Naive thymus-derived CD4-positive, alpha-beta T cell (primary cell): ENCODE measurements at regions of chr10 and their contacts with region 1.

Region 1: DNA sequence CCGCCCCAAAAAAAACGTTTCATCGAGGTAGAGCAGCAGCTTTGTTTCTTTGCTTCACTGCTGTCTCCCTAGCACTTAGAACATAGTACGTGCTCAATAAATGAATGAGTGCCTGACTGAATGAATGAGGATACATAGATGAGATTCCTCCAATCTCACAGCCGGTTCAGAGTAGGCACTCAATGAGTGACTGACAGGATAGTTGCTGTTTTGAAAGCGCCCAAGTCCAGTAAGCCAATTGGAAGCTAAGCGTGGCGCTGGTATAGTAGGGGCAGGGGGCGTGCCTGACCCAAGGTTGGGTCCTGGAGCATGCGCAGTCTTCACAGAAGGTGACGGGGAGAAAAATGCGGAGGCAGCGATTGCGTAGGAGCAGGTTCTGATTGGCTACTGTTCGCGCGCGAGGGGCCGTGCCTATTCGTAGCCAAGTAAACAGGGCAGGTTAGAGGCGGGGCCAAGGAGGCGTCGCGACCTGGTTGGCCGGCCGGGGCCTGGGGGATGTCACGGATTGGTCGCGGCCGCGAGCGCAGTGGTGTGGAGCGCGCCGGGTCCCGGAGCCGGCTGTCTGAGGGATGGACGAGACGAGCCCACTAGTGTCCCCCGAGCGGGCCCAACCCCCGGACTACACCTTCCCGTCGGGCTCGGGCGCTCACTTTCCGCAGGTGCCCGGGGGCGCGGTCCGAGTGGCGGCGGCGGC is at the start of gene PI4K2A:
- DNase-seq: peak; percentile 89 to 99 (median 98)
- ATAC-seq: peak; percentile 98
- H3K4me3 ChIP-seq: peak within 1 kb of the TSS; percentile 82
- H3K4me3 Mint-ChIP-seq: peak within 1 kb of the TSS; percentile 64 to 99 (median 94)
- H3K27ac ChIP-seq: peak within 1 kb of the TSS; percentile 70
- H3K27ac Mint-ChIP-seq: peak within 1 kb of the TSS; percentile 69 to 94 (median 89)
- H3K4me1 ChIP-seq: peaks cover 4 to 15% of the 10 kb centered on the region in 2 donors
- H3K4me1 Mint-ChIP-seq: peaks cover 10 to 34% (median 26%) of the 10 kb centered on the region in 7 donors
- H3K27me3 ChIP-seq: no peaks in the 10 kb centered on the region
- H3K27me3 Mint-ChIP-seq: no peaks in the 10 kb centered on the region
- total RNA-seq, gene PI4K2A: 9.0 to 33.8 (median 11.0) TPM

Region 2: DNA sequence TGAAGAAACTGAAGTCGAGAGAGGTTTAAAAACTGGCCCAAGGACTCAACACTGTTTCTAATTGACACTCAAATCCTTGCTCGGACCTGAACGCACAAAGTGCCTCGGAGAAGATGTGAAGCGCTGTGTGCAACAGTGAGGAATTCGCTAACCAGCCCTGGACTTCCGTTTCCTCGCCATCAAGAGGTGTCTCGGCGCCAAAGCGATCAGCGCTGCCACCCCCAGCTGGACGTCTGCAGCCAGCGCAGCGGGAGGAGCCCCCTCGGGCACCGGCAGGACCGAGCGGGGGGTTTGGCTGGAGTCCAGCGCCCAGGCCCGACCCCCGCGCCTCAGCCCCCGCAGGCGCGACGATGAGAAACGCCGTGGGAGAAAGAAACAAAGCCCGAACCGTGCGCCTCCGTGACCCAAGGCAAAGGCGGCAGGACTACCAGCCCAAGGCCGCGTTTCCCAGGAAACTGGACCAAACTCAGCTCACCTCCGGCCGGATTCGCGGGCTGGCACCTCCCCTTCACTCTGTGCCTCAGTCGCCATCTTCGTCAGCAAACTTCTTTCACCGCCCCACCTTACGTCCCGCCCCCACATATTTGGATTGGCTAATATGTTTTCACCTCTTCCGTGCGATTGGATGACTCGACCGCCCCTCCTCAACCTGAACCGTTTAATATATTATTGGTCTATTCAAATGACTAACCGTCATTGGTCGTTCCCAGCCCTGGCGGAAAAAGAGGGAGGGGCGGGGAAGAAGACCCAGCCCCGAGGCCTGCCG is 348.0 kb before region 1 on chr10 and contains the start of gene ARHGAP19:
- CTCF ChIA-PET with region 1: no interaction called
- POLR2A ChIA-PET with region 1: no interaction called
- intact Hi-C with region 1: loop called in 1 of 2 experiments (anchors 1 kb)
- DNase-seq: peak; percentile 65 to 97 (median 95)
- ATAC-seq: peak; percentile 100
- H3K4me3 ChIP-seq: peak within 1 kb of the TSS; percentile 88
- H3K4me3 Mint-ChIP-seq: peak within 1 kb of the TSS; percentile 83 to 97 (median 95)
- H3K27ac ChIP-seq: peak within 1 kb of the TSS; percentile 83
- H3K27ac Mint-ChIP-seq: peak within 1 kb of the TSS; percentile 32 to 98 (median 92)
- H3K4me1 ChIP-seq: peaks cover 4 to 8% of the 10 kb centered on the region in 2 donors
- H3K4me1 Mint-ChIP-seq: peaks cover 17 to 26% (median 24%) of the 10 kb centered on the region in 7 donors
- H3K27me3 ChIP-seq: no peaks in the 10 kb centered on the region
- H3K27me3 Mint-ChIP-seq: peaks cover 0 to 4% (median 0%) of the 10 kb centered on the region in 5 donors
- total RNA-seq, gene ARHGAP19: 12.8 to 40.1 (median 16.1) TPM

Region 3: GRCh38 chr10:97334370-97335175 is 305.7 kb before region 1 on chr10 and contains the start of gene FRAT2:
- CTCF ChIA-PET with region 1: no interaction called
- POLR2A ChIA-PET with region 1: no interaction called
- intact Hi-C with region 1: loop called (anchors 1 to 5 kb)
- DNase-seq: peak; percentile 85 to 96 (median 92)
- ATAC-seq: peak; percentile 94
- H3K4me3 ChIP-seq: peak within 1 kb of the TSS; percentile 78
- H3K4me3 Mint-ChIP-seq: peak within 1 kb of the TSS; percentile 88 to 98 (median 94)
- H3K27ac ChIP-seq: peak within 1 kb of the TSS; percentile 97
- H3K27ac Mint-ChIP-seq: peak within 1 kb of the TSS; percentile 89 to 97 (median 93)
- H3K4me1 ChIP-seq: peaks cover 20 to 24% of the 10 kb centered on the region in 2 donors
- H3K4me1 Mint-ChIP-seq: peaks cover 28 to 48% (median 42%) of the 10 kb centered on the region in 7 donors
- H3K27me3 ChIP-seq: no peaks in the 10 kb centered on the region
- H3K27me3 Mint-ChIP-seq: peaks cover 0 to 36% (median 0%) of the 10 kb centered on the region in 5 donors
- total RNA-seq, gene FRAT2: 9.3 to 39.7 (median 29.8) TPM

Region 4: GRCh38 chr10:97425964-97426775 is 214.2 kb before region 1 on chr10 and contains the start of gene PGAM1:
- CTCF ChIA-PET with region 1: no interaction called
- POLR2A ChIA-PET with region 1: no interaction called
- intact Hi-C with region 1: loop called in 1 of 2 experiments (anchors 1 kb)
- DNase-seq: peak; percentile 93 to 98 (median 97)
- ATAC-seq: peak; percentile 91
- H3K4me3 ChIP-seq: peak within 1 kb of the TSS; percentile 92
- H3K4me3 Mint-ChIP-seq: peak within 1 kb of the TSS; percentile 83 to 97 (median 95)
- H3K27ac ChIP-seq: peak within 1 kb of the TSS; percentile 87
- H3K27ac Mint-ChIP-seq: peak within 1 kb of the TSS; percentile 77 to 99 (median 95)
- H3K4me1 ChIP-seq: peaks cover 20 to 29% of the 10 kb centered on the region in 2 donors
- H3K4me1 Mint-ChIP-seq: peaks cover 10 to 53% (median 34%) of the 10 kb centered on the region in 7 donors
- H3K27me3 ChIP-seq: no peaks in the 10 kb centered on the region
- H3K27me3 Mint-ChIP-seq: peaks cover 0 to 2% (median 0%) of the 10 kb centered on the region in 5 donors
- total RNA-seq, gene PGAM1: 58.5 to 536 (median 69.8) TPM

Region 5: DNA sequence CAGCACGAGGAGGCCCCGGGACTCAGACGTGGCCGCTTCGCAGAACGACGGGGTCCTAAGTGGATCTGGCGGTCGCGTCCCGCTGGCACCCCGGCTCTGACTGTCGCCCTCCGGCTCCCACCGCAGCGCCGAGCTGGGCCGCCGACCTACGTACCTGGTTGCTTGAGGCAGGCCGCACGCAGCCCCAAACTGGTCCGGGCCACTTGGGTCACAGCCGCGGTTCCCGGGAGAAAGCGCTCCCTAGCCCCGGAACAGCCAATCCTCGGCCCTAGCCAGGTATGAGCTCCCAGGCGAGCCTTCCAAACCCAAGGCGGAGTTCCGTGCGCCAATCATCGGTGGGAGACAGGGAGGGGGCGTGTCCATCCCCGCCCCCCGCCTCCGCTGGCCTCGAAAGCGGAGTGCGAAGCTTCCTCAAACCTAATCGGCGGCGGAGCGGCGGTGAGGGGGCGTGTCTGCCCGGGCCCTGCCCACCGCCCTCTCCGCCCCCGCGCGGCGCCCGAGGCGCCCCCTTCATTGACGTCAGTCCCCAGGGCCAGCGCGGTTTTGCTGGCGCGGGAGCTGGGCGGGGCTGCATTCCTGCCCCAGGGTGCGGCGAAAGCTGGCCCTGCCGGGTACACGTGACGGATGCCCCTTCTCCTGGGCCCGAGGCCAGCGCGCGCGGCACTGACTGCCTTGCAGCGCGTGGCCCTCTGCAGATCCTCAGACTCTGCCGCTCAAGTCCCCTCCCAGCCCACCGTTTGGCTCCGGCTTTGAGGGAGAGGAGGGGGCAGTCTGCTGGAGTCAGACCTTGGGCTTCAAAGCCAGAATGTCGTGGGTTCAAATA is 46.9 kb after region 1 on chr10 and contains the start of gene AVPI1:
- CTCF ChIA-PET with region 1: no interaction called
- POLR2A ChIA-PET with region 1: interaction called, 7 read pairs
- intact Hi-C with region 1: loop called (anchors 1 kb)
- DNase-seq: peak; percentile 94 to 97 (median 96)
- ATAC-seq: peak; percentile 97
- H3K4me3 ChIP-seq: peak within 1 kb of the TSS; percentile 80
- H3K4me3 Mint-ChIP-seq: peak within 1 kb of the TSS; percentile 85 to 90 (median 88)
- H3K27ac ChIP-seq: peak within 1 kb of the TSS; percentile 81
- H3K27ac Mint-ChIP-seq: peak within 1 kb of the TSS; percentile 28 to 96 (median 91)
- H3K4me1 ChIP-seq: peaks cover 5 to 25% of the 10 kb centered on the region in 2 donors
- H3K4me1 Mint-ChIP-seq: peaks cover 9 to 30% (median 19%) of the 10 kb centered on the region in 7 donors
- H3K27me3 ChIP-seq: no peaks in the 10 kb centered on the region
- H3K27me3 Mint-ChIP-seq: peaks cover 0 to 2% (median 0%) of the 10 kb centered on the region in 5 donors
- total RNA-seq, gene AVPI1: 0.65 to 10.6 (median 2.5) TPM

Region 6: GRCh38 chr10:97736902-97737769 is 96.8 kb after region 1 on chr10 and contains the start of gene ZFYVE27:
- CTCF ChIA-PET with region 1: no interaction called
- POLR2A ChIA-PET with region 1: interaction called, 4 read pairs
- intact Hi-C with region 1: loop called (anchors 1 to 2 kb)
- DNase-seq: peak; percentile 88 to 99 (median 94)
- ATAC-seq: peak; percentile 96
- H3K4me3 ChIP-seq: peak within 1 kb of the TSS; percentile 86
- H3K4me3 Mint-ChIP-seq: peak within 1 kb of the TSS; percentile 88 to 98 (median 94)
- H3K27ac ChIP-seq: peak within 1 kb of the TSS; percentile 99
- H3K27ac Mint-ChIP-seq: peak within 1 kb of the TSS; percentile 95 to 99 (median 97)
- H3K4me1 ChIP-seq: peaks cover 18% of the 10 kb centered on the region in 2 donors
- H3K4me1 Mint-ChIP-seq: peaks cover 20 to 62% (median 58%) of the 10 kb centered on the region in 7 donors
- H3K27me3 ChIP-seq: no peaks in the 10 kb centered on the region
- H3K27me3 Mint-ChIP-seq: peaks cover 0 to 3% (median 0%) of the 10 kb centered on the region in 5 donors
- total RNA-seq, gene ZFYVE27: 31.0 to 68.8 (median 61.8) TPM

Region 7: DNA sequence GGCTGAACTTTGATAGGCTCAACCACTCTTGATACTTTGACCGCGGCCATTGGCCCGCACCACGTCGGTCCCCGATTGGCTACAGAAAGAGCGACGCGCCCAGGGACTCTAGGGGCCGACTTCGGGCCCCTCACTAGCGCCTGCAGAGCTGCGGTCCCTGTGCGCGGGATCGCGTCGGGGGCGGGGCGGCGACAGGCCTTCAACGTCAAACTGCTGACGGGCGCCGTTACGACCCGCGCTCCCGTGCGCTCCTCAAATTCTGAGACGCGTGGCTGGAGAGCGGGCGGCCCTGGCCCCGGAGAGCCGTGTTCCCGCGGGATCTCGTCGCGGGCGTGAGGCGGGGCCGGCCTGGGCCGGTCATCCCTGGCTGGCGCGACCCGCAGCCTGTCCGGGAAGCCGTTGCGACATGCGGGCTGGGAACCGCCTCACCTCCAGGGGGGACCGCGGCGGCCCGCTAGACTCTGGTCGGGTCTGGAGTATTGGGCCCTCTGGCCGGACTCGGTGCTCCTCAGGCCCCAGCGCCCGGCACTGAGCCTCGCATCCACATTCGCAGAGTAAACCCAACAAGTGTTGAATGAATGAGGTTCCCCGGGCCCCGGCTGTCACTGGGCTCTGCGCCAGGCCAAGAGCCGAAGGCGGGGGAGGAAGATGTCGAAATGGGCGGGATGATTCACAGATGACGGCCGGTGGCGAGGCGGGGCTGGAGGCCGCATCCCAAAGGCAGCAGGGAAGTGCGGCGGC is 1980.6 kb after region 1 on chr10:
- CTCF ChIA-PET with region 1: no interaction called
- POLR2A ChIA-PET with region 1: no interaction called
- intact Hi-C with region 1: loop called in 1 of 2 experiments (anchors 2 kb)
- DNase-seq: peak in 7 of 9 donors; percentile 66 to 86 (median 73)
- ATAC-seq: peak; percentile 89
- H3K4me3 ChIP-seq: peak overlapping the region; percentile 85
- H3K4me3 Mint-ChIP-seq: peak overlapping the region; percentile 83 to 93 (median 88)
- H3K27ac ChIP-seq: peak overlapping the region; percentile 99
- H3K27ac Mint-ChIP-seq: peak overlapping the region; percentile 75 to 98 (median 94)
- H3K4me1 ChIP-seq: peaks cover 20 to 29% of the 10 kb centered on the region in 2 donors
- H3K4me1 Mint-ChIP-seq: peaks cover 27 to 53% (median 45%) of the 10 kb centered on the region in 7 donors
- H3K27me3 ChIP-seq: no peaks in the 10 kb centered on the region
- H3K27me3 Mint-ChIP-seq: no peaks in the 10 kb centered on the region